Activated T-helper 1 cell treated with anti-CD3 and anti-CD28 coated beads, Interleukin-12 subunit alpha, Interleukin-12 subunit beta, Interleukin-2, Interleukin-4 antibody, amounts not matched to agents 30 ng/mL and 10 ng/mL and 1 ng/mL, durations not matched to agents 14 hours and 24 hours and 36 hours (primary cell): ENCODE measurements at regions of chr11 and their contacts with region 1.

Region 1: DNA sequence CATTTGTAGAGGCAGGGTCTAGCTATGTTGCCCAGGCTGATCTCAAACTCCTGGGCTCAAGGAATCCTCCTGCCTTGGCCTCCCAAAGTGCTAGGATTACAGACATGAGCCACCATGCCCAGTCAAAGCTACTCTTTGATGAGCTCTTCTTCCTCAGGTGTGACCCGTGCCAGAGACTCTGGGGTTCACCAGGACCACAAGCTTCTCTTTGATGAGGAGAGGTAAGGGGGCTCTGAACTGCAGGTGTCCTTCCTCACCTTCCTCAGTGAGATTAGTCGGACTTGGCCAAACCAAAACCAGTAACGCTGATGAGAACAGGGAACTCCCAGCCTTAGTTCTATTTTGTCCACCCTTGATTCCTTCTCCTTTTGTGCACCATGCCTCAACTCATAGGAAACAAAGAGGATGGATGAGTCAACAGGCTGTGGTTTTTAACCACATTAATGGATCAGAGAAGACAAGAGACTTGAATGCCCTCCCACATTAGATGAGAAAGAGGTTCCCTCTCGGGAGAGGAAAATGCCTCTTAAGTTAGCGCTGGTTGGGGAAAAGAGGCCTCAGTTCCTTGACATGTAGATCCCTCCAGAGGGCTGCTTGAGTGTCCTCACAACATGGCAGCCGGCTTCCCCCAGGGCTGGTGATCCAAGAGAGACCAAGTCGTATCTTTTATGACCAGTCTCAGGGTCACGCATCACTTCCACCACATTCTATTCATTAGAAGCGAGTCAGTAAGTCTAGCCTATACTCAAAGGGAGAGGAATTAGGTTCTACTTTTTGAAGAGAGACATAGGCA is 25.7 kb upstream of the CTR9 start:
- DNase-seq: no peak
- H3K4me3 Mint-ChIP-seq: peak overlapping the region; percentile 47
- H3K27ac Mint-ChIP-seq: peak overlapping the region; percentile 61
- H3K4me1 Mint-ChIP-seq: peaks cover 24% of the 10 kb centered on the region
- H3K27me3 Mint-ChIP-seq: peaks cover 22% of the 10 kb centered on the region

Region 2: GRCh38 chr11:10742471-10743208 is 17.3 kb after region 1 on chr11:
- intact Hi-C with region 1: loop called (anchors 2 kb)
- DNase-seq: peak; percentile 17
- H3K4me3 Mint-ChIP-seq: peak overlapping the region; percentile 27
- H3K27ac Mint-ChIP-seq: peak overlapping the region; percentile 7
- H3K4me1 Mint-ChIP-seq: peaks cover 35% of the 10 kb centered on the region
- H3K27me3 Mint-ChIP-seq: no peaks in the 10 kb centered on the region

Region 3: DNA sequence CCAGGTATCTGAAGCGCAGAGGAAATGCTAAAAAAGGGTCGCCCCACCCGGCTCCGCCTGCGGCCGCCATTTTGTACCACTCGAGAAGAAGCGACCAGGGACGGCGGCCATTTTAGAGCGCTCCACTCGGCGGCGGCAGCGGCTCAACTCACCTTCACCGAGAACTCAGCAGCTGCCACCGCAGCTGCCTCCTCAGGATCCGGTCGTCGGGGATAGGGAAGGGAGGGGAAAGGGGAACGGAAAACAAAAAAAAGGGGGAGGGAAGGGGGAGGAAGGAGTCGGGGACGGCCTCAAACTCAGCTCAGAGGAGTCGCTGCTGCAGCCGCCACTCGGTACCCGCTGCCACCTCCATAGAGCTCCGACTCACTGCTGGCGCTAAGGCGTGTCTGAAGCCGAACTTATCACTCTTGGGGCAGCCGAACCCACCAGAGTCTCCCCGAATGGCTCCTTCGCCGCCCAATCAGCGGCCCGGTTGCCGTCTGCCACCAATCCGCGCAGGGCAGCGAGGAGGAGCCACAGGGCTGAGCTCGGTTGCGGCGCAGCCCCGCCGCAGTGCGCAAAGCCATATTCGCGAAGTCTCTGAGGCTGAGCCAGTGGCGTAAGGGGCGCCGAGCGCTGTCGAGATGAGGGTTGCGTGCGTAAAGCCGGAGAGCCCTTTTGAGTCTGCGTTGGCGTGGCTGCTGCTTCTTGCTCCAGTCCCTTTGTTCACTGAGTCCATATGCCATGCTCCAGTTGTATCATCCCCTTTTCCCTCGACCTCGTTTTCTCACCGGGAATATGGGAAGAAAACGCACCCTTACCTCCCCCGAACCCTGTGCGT is 83.5 kb after region 1 on chr11 and contains the start of gene EIF4G2:
- intact Hi-C with region 1: no loop called
- DNase-seq: peak; percentile 98
- H3K4me3 Mint-ChIP-seq: peak within 1 kb of the TSS; percentile 95
- H3K27ac Mint-ChIP-seq: peak within 1 kb of the TSS; percentile 98
- H3K4me1 Mint-ChIP-seq: peaks cover 43% of the 10 kb centered on the region
- H3K27me3 Mint-ChIP-seq: no peaks in the 10 kb centered on the region
- total RNA-seq, gene EIF4G2: 1,084 and 1,108 TPM in 2 replicates